ENCODE measurements at regions of chr1 and their contacts with region 1.

Region 1: GRCh38 chr1:223133824-223134435 is 9.1 kb downstream of the TLR5 start:
- DNase-seq: peak; percentile 60
- H3K4me3 ChIP-seq: peak overlapping the region; percentile 32
- CTCF ChIP-seq: peak; percentile 96

Region 2: GRCh38 chr1:223062177-223062576 is 71.8 kb before region 1 on chr1:
- in situ Hi-C with region 1: no loop called
- DNase-seq: no peak
- H3K4me3 ChIP-seq: no peak overlapping the region
- CTCF ChIP-seq: no peak

Region 3: DNA sequence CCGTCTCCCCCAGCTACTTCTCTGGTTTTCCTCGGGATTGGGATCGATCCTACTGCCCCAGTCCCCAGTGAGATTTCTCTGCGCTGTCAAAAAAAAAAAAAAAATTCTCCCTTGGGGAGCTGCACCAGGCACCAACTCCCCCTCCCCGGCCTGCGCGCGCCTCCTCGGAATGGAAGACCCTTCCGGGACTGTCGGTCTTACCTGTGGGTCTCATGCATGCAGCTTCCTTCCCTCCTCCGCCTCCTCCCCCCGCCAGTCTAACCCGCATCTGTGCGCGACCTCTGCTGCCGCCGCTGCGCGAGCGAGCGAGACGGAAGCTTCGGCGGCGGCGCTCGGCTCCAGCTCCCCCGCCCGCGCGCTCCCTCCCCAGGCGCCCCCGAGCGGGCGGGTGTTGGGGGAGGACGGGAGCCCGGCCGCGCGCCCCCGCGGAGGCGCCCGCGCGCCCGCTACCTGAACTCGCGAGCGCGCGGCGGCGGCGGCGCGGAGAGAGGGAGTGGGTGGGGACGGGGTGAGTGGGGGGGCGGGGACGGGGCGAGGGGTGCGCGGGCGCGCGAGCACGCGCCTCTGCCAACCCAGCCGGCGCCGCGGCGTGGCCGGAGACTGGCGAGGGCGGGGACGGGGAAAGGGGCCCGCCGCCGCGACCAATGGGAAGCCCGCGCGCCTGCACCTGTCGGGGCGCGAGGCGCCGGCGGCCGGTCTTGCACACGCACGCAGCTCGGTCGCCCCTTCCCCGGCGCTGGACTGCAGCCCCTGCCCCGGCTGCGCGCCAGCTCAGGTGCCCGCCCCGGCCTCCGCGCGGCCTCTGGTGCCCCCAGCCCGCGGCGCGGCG is 230.1 kb after region 1 on chr1 and contains the start of gene SUSD4:
- in situ Hi-C with region 1: loop called (anchors 5 kb)
- DNase-seq: no peak
- H3K4me3 ChIP-seq: peak within 1 kb of the TSS; percentile 38
- CTCF ChIP-seq: no peak

Region 4: DNA sequence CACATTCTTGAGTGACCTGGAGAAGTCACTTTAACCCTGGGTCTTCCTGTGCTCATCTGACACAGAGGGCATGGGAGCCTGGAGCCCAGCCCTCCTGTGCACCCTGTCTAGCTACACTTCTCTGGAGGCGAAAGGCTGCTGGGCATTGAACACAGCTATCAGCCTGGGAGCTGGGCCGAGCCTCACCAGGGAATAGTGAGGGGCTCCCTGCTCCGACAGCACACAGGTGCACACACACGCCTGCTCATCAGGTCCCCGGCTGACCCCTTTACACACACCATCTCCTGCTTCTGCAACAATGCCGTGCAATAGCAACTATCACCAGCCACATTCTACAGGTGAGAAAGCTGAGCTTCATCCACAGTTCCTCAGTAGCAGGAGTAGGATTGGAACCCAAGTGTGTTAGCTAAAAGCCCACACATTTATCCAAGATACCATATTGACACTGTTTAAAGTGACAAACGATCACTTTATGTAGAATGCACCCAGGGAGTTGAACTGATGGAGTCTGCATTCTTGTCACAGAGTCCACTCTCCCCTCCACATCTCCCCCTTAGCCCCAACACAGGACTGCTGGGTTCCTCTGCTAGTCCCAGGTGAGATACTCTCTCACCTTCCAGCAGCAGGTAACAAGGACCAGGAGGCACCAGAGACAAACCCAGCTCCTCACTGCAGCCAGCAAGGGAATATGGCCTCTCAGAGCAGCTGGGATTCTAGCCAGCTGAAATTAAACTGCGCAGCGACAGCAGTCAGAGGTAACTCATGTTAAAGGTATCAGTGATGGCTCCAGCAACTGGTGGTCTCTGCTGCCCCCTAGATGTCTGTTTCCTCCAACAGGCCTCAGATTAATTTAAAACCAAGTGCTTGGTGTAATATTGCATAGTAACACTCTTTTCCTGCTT is 549.9 kb after region 1 on chr1:
- in situ Hi-C with region 1: loop called (anchors 5 kb)
- DNase-seq: peak; percentile 44
- H3K4me3 ChIP-seq: no peak overlapping the region
- CTCF ChIP-seq: peak; percentile 75

Measured in astrocyte of the cerebellum (primary cell).